ENCODE measurements at regions of chr18 and their contacts with region 1.

Region 1: GRCh38 chr18:57666818-57667497 is 45.3 kb upstream of the NARS1 start:
- DNase-seq: no peak
- ATAC-seq: no peak
- H3K4me3 Mint-ChIP-seq: no peak overlapping the region
- H3K27ac Mint-ChIP-seq: peak overlapping the region; percentile 24
- H3K4me1 Mint-ChIP-seq: peaks cover 75% of the 10 kb centered on the region
- H3K27me3 Mint-ChIP-seq: no peaks in the 10 kb centered on the region
- CTCF ChIP-seq: no peak

Region 2: GRCh38 chr18:57677262-57678211 is 10.6 kb after region 1 on chr18:
- CTCF ChIA-PET with region 1: interaction called, 4 read pairs
- POLR2A ChIA-PET with region 1: interaction called, 3 read pairs
- intact Hi-C with region 1: loop called (anchors 2 kb)
- DNase-seq: no peak
- ATAC-seq: no peak
- H3K4me3 Mint-ChIP-seq: no peak overlapping the region
- H3K27ac Mint-ChIP-seq: no peak overlapping the region
- H3K4me1 Mint-ChIP-seq: peaks cover 43% of the 10 kb centered on the region
- H3K27me3 Mint-ChIP-seq: no peaks in the 10 kb centered on the region
- CTCF ChIP-seq: no peak

Measured in activated B cell treated with CpG ODN at 0.5 μM for 24 hours (primary cell).